WTC11 (cell line): ENCODE measurements at regions of chr11 and their contacts with region 1.

Region 1: DNA sequence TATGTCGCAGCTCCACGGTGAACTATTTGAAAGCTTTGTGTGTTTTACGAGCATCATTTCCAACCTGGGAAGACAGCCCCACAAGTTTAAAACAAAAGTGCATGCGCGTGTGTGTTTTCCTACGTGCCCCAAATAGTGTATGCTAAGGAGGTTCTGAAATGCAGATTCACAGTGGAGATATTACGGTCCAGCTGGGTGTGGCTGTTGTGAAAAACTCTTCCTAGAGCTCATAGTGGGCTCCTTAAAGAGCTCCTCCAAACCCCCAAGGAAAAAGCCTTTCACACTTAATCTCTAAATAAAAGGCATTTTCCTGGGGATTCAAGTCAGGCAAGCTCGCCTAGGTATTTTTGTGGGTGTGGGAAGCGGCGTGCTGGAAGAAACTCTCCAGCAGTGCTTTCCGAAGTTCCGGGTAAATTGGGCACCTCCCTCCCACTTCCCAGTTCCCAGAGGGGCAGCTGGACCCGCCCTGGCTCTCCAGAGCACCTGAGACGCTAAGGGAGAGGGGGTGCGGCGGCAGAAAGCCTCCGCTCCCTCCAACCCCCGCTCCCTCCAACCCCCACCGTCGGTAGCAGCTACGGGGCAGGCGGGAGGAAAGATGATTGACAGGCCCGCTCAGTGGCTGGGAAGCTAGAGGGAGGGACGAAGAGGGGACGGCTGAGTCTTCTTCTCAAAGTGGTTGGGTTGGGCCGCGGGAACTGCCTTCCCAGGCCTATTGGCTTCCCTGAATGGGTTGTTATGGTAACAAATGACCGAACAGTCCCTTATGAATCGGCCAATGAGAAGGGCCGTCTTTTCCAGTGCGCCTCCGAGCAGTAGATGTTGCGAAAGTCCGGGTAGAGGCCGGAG is 558 bp upstream of the PCF11 start:
- DNase-seq: peak; percentile 97
- ATAC-seq: peak; percentile 93
- H3K4me3 Mint-ChIP-seq: peak overlapping the region; percentile 99
- H3K27ac Mint-ChIP-seq: peak overlapping the region; percentile 92
- H3K4me1 Mint-ChIP-seq: peaks cover 20% of the 10 kb centered on the region
- H3K27me3 Mint-ChIP-seq: no peaks in the 10 kb centered on the region
- CTCF ChIP-seq: no peak

Region 2: GRCh38 chr11:83071567-83072349 is 84.6 kb before region 1 on chr11 and contains the start of gene RAB30:
- CTCF ChIA-PET with region 1: no interaction called
- POLR2A ChIA-PET with region 1: interaction called, 25 read pairs
- DNase-seq: peak; percentile 95
- ATAC-seq: peak; percentile 97
- H3K4me3 Mint-ChIP-seq: no peak within 1 kb of the TSS
- H3K27ac Mint-ChIP-seq: no peak within 1 kb of the TSS
- H3K4me1 Mint-ChIP-seq: peaks cover 36% of the 10 kb centered on the region
- H3K27me3 Mint-ChIP-seq: no peaks in the 10 kb centered on the region
- CTCF ChIP-seq: no peak
- total RNA-seq, gene RAB30: 6.2 to 7.5 TPM (median 6.7 TPM) in 3 replicates

Region 3: GRCh38 chr11:83317757-83318690 is 161.7 kb after region 1 on chr11:
- CTCF ChIA-PET with region 1: no interaction called
- POLR2A ChIA-PET with region 1: no interaction called
- DNase-seq: no peak
- ATAC-seq: no peak
- H3K4me3 Mint-ChIP-seq: no peak overlapping the region
- H3K27ac Mint-ChIP-seq: no peak overlapping the region
- H3K4me1 Mint-ChIP-seq: no peaks in the 10 kb centered on the region
- H3K27me3 Mint-ChIP-seq: 0 out of 2 replicates have a peak, but pooled peaks cover 4% of the 10 kb centered on the region
- CTCF ChIP-seq: no peak